ENCODE measurements at regions of chr1 and their contacts with region 1.

Region 1: GRCh38 chr1:87151500-87152421 is 176.9 kb upstream of the LMO4 start:
- DNase-seq: peak; percentile 79
- ATAC-seq: peak; percentile 90 to 94

Region 2: DNA sequence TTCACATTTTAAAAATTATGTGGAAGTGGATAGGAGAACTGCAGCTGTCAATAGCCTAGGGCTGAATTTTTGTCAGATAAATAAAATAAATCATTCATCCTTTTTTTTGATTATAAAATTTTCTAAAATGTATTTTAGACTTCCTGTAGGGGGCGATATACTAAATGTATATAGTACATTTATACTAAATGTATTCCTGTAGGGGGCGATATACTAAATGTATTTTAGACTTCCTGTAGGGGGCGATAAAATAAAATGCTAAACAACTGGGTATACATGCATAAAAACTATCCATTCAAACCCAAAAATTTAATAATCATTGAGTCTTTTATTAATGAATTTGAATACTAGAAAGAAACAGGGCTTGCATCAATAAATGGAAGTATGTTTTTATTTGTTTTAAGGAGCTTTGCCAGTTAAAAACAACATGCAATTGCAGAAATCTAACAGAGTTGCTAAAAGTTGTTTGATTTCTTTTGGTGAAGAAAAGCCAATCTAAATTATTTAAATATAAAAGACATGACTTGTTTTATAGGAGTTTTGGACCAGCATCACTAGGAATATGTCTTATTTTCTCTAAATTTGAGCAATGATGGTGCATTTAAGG is 651.7 kb before region 1 on chr1:
- intact Hi-C with region 1: loop called in 1 of 2 experiments (anchors 5 kb)
- DNase-seq: no peak
- ATAC-seq: no peak

Region 3: GRCh38 chr1:87279966-87280535 is 128.3 kb after region 1 on chr1:
- intact Hi-C with region 1: loop called in 1 of 2 experiments (anchors 10 kb)
- DNase-seq: no peak
- ATAC-seq: no peak

Region 4: GRCh38 chr1:87386217-87386790 is 234.5 kb after region 1 on chr1:
- intact Hi-C with region 1: no loop called
- DNase-seq: no peak
- ATAC-seq: no peak

Measured in left cardiac atrium (tissue), 4 donors.